Right ventricle myocardium superior (tissue), 1 donor: ENCODE measurements at regions of chr5 and their contacts with region 1.

Region 1: GRCh38 chr5:73229209-73229661 is 56.2 kb downstream of the TMEM174 start:
- DNase-seq: no peak
- ATAC-seq: no peak

Region 2: DNA sequence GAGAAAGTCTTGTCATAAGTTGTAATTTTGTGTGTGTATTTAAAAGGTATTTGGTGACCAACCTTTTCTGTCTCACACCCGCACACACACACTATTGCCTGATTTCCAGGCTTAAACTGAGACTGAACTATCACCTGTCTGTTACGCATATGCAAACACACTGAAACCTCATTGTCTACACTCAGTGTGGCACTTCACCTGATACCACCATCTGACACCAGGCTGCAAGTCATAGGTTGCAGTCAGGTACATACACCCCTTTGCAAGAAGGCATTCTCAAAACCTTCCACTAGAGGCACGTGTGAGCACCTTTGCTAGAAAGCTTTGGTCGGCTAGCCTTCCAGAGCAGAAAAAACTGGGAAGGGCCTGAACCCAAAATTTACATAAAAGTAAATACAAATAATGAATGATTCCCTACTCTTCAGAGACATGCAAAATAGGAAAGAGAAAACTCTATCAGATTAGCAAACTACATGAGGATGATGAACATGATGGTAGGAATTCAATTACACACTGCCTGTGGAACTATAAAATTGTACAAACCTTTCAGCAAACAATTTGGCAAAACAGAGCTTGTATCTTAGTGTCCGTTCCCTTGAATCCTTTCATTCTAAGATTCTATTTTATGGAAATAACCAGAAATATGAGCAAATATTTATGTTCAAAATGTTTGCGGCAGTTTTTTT is 225.3 kb after region 1 on chr5:
- intact Hi-C with region 1: loop called (anchors 10 kb)
- DNase-seq: no peak
- ATAC-seq: peak; percentile 64